ENCODE measurements at regions of chr6 and their contacts with region 1.

Region 1: GRCh38 chr6:40342723-40343122 is 244.4 kb downstream of the LRFN2 start:
- DNase-seq: no peak
- ATAC-seq: no peak
- H3K4me3 ChIP-seq: no peak overlapping the region
- H3K27ac ChIP-seq: no peak overlapping the region
- H3K4me1 ChIP-seq: no peaks in the 10 kb centered on the region
- H3K27me3 ChIP-seq: peaks cover 3% of the 10 kb centered on the region; the same call in 1 of the 2 replicates
- CTCF ChIP-seq: no peak

Region 2: GRCh38 chr6:39088331-39088730 is 1254.4 kb before region 1 on chr6:
- CTCF ChIA-PET with region 1: interaction called, 11 read pairs
- POLR2A ChIA-PET with region 1: no interaction called
- in situ Hi-C with region 1: no loop called
- intact Hi-C with region 1: no loop called
- DNase-seq: no peak
- ATAC-seq: peak; percentile 66; the same call in 1 of the 2 replicates
- H3K4me3 ChIP-seq: no peak overlapping the region
- H3K27ac ChIP-seq: no peak overlapping the region
- H3K4me1 ChIP-seq: no peaks in the 10 kb centered on the region
- H3K27me3 ChIP-seq: peaks cover 41% of the 10 kb centered on the region
- CTCF ChIP-seq: no peak

Region 3: DNA sequence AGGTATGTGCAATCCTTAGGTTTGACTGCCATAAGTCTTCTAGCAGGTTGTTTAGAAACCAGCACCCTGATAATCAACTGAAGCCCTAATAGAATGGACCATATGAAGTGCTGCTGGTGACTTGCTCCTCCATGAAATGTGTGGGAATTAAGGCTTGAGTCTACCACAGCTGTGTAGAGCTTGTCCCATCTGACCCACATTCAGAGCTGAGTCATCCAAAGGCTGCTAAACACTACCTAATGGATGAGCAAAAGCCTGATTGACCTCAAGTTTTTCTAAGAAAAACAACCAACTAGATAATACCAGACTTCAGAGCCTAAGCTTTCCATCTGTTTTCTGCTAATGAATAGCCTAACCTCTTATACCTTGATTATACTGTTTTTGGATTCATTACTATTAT is 288.1 kb before region 1 on chr6:
- CTCF ChIA-PET with region 1: no interaction called
- POLR2A ChIA-PET with region 1: no interaction called
- in situ Hi-C with region 1: no loop called
- intact Hi-C with region 1: no loop called
- DNase-seq: no peak
- ATAC-seq: no peak
- H3K4me3 ChIP-seq: no peak overlapping the region
- H3K27ac ChIP-seq: no peak overlapping the region
- H3K4me1 ChIP-seq: no peaks in the 10 kb centered on the region
- H3K27me3 ChIP-seq: no peaks in the 10 kb centered on the region
- CTCF ChIP-seq: no peak

Region 4: GRCh38 chr6:40536442-40536841 is 193.7 kb after region 1 on chr6:
- CTCF ChIA-PET with region 1: no interaction called
- POLR2A ChIA-PET with region 1: no interaction called
- in situ Hi-C with region 1: no loop called
- intact Hi-C with region 1: no loop called
- DNase-seq: no peak
- ATAC-seq: peak; percentile 76
- H3K4me3 ChIP-seq: no peak overlapping the region
- H3K27ac ChIP-seq: no peak overlapping the region
- H3K4me1 ChIP-seq: no peaks in the 10 kb centered on the region
- H3K27me3 ChIP-seq: no peaks in the 10 kb centered on the region; the same call in 1 of the 2 replicates
- CTCF ChIP-seq: no peak; the same call in 1 of the 2 replicates

Measured in Panc1 (cell line).